SK-N-SH (cell line): ENCODE measurements at regions of chr20 and their contacts with region 1.

Region 1: DNA sequence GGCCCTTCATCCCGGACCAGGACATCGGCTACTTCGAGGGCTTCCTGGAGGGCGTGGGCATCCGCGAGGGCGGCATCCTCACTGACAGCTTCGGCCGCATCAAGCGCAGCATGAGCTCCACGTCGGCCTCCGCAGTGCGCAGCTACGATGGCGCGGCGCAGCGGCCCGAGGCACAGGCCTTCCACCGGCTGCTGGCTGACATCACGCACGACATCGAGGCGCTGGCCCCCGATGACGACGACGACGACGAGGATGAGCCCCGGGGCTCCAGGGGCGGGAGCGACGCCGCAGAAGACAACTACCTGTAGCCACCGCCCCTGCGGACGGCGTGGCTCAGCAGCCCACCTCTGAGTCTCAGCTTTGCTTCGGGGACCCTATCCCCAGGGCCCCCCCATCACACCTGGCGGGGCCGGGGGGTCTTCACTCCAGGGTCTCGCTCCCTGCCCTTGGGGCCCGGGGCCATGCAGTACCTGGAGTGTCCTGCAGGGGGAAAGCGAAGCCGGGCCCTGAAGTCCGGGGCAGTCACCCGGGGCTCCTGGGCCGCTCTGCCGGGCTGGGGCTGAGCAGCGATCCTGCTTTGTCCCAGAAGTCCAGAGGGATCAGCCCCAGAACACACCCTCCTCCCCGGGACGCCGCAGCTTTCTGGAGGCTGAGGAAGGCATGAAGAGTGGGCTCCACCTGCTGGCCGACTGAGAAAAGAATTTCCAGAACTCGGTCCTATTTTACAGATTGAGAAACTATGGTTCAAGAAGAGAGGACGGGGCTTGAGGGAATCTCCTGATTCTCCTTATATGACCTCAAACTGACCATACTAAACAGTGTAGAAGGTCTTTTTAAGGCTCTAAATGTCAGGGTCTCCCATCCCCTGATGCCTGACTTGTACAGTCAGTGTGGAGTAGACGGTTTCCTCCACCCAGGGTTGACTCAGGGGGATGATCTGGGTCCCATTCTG is 20.8 kb upstream of the HCK start:
- DNase-seq: peak; percentile 89
- H3K4me3 ChIP-seq: peak overlapping the region; percentile 34 to 87; a peak in 3 of 4 replicates
- H3K27ac ChIP-seq: no peak overlapping the region
- H3K4me1 ChIP-seq: peaks cover 0 to 7% of the 10 kb centered on the region in 2 experiments; a peak in 1 of 4 replicates
- H3K27me3 ChIP-seq: peaks cover 38% of the 10 kb centered on the region
- CTCF ChIP-seq: peak; percentile 98
- EP300 ChIP-seq: no peak
- RAD21 ChIP-seq: peak; percentile 82

Region 2: GRCh38 chr20:31822421-31823330 is 208.6 kb before region 1 on chr20:
- CTCF ChIA-PET with region 1: interaction called, 120 read pairs
- POLR2A ChIA-PET with region 1: interaction called, 3 read pairs
- DNase-seq: peak; percentile 94
- H3K4me3 ChIP-seq: peak overlapping the region; percentile 41 to 70
- H3K27ac ChIP-seq: peak overlapping the region in 1 of 2 experiments; percentile 66; a peak in 2 of 4 replicates
- H3K4me1 ChIP-seq: peaks cover 0 to 8% of the 10 kb centered on the region in 2 experiments; a peak in 1 of 4 replicates
- H3K27me3 ChIP-seq: no peaks in the 10 kb centered on the region
- CTCF ChIP-seq: peak; percentile 98
- EP300 ChIP-seq: no peak
- RAD21 ChIP-seq: peak; percentile 96

Region 3: DNA sequence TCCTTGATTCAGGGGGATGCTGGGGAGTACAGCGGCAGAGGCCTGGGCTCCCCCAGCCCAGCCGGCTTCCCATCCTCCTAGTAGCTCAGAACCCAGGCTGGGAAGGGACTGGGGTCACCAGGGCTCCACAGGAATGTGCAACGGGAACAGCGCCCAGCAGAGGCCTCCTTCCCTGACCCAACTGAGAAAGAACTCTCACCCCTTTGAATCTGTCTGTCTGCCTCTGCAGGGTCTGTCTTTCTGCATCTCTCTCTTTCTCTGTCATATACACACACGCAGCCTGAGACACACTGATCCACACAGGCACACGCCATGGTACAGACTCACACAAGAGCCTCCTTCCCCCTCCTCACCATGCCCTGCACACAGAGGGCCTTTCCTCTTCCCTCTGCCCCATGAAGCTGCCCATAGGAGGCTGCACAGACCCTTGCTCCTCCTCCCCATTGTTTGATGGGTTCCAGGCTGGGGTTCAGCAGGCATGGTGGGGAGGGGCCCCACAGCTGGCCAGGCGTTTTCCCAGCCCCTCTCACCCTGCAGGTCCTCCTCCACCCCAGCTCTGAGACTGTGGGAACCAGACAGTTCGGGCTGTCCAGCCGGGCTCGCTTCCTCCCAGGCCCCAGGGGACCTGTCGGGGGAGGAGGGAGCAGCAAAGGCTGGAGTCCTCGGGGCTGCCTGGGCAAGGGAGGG is 188.7 kb before region 1 on chr20:
- CTCF ChIA-PET with region 1: interaction called, 43 read pairs
- POLR2A ChIA-PET with region 1: no interaction called
- DNase-seq: peak; percentile 58
- H3K4me3 ChIP-seq: no peak overlapping the region; a peak in 1 of 4 replicates
- H3K27ac ChIP-seq: peak overlapping the region; percentile 71 to 76
- H3K4me1 ChIP-seq: peaks cover 37 to 42% of the 10 kb centered on the region in 2 experiments
- H3K27me3 ChIP-seq: no peaks in the 10 kb centered on the region
- CTCF ChIP-seq: no peak
- EP300 ChIP-seq: no peak
- RAD21 ChIP-seq: no peak

Region 4: DNA sequence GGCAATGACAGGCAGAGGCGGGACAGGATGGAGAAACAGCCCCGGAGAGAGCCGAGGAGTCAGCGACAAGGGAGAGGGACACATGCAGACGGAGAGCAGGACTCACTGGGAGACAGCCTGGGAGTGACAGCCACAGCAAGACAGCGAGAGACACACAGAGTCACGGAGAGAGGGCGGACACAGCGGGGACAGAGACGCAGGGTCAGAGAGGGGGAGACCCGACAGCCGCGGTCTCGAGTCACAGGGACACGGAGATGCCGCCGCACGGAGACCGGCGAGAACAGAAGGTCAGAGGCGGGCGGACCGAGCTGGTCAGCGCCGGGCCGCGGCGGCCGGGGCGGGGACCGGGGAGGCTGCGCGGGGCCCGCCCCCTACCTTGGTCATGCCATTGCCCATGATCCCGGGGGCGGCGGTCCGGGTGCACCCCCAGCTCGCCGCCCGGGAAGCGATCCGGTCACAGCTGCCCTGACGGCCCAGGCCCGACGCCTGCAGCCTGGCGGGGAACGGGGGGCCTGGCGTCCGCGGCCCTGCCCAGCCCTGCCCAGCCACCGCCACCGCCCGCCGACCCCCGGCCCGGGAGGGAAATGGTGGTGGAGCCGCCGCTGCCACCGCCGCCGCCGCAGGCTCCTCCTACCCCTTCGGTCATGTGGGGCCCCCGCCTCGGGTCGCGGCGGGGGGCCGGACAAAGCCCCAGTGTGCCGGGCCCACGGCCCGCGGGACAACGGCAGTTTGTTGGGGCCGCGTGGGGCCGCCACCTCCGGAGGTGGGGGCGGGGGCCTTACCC is 161.1 kb before region 1 on chr20 and contains the starts of genes DUSP15 and TTLL9:
- CTCF ChIA-PET with region 1: interaction called, 11 read pairs
- POLR2A ChIA-PET with region 1: no interaction called
- DNase-seq: peak; percentile 90
- H3K4me3 ChIP-seq: peak within 1 kb of the TSS; percentile 66 to 69
- H3K27ac ChIP-seq: peak within 1 kb of the TSS in 1 of 2 experiments; percentile 62; a peak in 1 of 4 replicates
- H3K4me1 ChIP-seq: peaks cover 0 to 23% of the 10 kb centered on the region in 2 experiments; a peak in 1 of 4 replicates
- H3K27me3 ChIP-seq: no peaks in the 10 kb centered on the region
- CTCF ChIP-seq: no peak
- EP300 ChIP-seq: no peak
- RAD21 ChIP-seq: no peak
- polyA plus RNA-seq, gene DUSP15: 4.3 and 5.4 TPM in 2 replicates
- polyA plus RNA-seq, gene TTLL9: 0.23 and 0.32 TPM in 2 replicates

Region 5: GRCh38 chr20:31968291-31969126 is 62.8 kb before region 1 on chr20:
- CTCF ChIA-PET with region 1: interaction called, 34 read pairs
- POLR2A ChIA-PET with region 1: no interaction called
- DNase-seq: peak; percentile 81
- H3K4me3 ChIP-seq: peak overlapping the region; percentile 55 to 56; a peak in 3 of 4 replicates
- H3K27ac ChIP-seq: peak overlapping the region in 1 of 2 experiments; percentile 75; a peak in 2 of 4 replicates
- H3K4me1 ChIP-seq: peaks cover 0 to 17% of the 10 kb centered on the region in 2 experiments; a peak in 2 of 4 replicates
- H3K27me3 ChIP-seq: peaks cover 30% of the 10 kb centered on the region
- CTCF ChIP-seq: no peak
- EP300 ChIP-seq: peak in 1 of 2 experiments; percentile 24; a peak in 1 of 4 replicates
- RAD21 ChIP-seq: no peak

Region 6: DNA sequence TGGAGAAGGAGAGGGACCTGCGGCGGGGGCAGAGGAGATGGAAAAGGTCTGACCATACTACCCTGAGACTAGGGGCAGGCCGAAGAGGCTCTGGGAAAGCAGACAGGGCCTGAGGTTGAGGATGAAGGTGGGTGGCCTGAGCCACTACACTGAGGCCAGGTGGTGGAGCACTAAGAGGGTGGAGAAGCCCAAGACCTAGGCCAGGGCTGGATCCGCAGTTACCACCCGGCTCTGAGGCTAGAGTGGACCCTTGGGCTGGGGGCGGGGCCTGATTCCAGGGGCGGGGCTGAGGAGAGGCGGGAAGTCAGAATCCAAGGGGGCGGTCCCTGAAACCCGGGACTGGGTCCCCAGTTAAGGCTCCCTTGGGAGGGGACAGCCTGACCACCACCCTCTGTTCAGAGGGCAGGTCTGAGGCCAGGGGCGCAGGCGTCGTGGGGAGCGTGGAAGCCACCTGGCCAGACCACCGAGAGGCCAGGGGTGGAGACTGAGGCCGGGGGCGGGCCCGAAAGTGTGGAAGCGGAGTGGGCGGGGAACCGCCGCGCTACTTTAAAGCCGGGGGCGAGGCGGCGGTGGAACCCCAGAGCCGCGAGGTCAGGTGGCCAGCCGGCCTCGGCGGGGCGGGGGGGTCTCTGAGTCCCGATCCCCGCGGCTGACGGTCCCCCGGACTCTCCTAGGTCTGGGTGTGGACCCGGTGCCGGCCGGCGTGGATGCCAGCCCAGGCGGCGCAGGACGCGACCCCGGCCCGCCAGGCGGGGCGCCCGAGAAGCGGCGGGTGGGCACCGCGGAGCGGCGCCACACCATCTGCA is 12.8 kb before region 1 on chr20:
- CTCF ChIA-PET with region 1: interaction called, 74 read pairs
- POLR2A ChIA-PET with region 1: interaction called, 5 read pairs
- DNase-seq: peak; percentile 96
- H3K4me3 ChIP-seq: peak overlapping the region; percentile 46 to 54
- H3K27ac ChIP-seq: no peak overlapping the region
- H3K4me1 ChIP-seq: peaks cover 0 to 13% of the 10 kb centered on the region in 2 experiments; a peak in 1 of 4 replicates
- H3K27me3 ChIP-seq: peaks cover 61% of the 10 kb centered on the region
- CTCF ChIP-seq: no peak
- EP300 ChIP-seq: no peak
- RAD21 ChIP-seq: no peak

Region 7: GRCh38 chr20:32077190-32077589 is 45.9 kb after region 1 on chr20:
- CTCF ChIA-PET with region 1: interaction called, 11 read pairs
- POLR2A ChIA-PET with region 1: no interaction called
- DNase-seq: no peak
- H3K4me3 ChIP-seq: no peak overlapping the region
- H3K27ac ChIP-seq: no peak overlapping the region
- H3K4me1 ChIP-seq: no peaks in the 10 kb centered on the region; a peak in 1 of 4 replicates
- H3K27me3 ChIP-seq: no peaks in the 10 kb centered on the region; the same call in none of the 2 replicates
- CTCF ChIP-seq: no peak
- EP300 ChIP-seq: no peak
- RAD21 ChIP-seq: no peak

Region 8: DNA sequence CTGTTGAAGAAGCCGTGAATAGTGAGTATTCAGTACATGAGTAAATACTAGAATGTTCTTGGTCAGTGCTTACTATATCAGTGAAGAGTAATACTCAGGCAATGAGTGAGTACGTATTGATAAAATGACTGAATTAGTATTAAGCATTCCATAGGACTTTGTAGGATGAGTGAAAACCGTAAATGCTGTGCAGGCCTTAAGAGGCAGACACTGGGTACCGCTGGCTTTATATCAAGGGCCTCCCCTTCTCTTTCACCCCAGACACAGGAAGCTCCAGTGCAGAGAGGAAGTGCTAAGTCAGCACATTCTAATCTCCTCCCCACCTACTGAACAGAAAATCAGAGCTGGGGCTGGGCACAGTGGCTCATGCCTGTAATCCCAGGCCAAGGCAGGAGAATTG is 200.6 kb after region 1 on chr20:
- CTCF ChIA-PET with region 1: no interaction called
- POLR2A ChIA-PET with region 1: no interaction called
- DNase-seq: no peak
- H3K4me3 ChIP-seq: no peak overlapping the region
- H3K27ac ChIP-seq: no peak overlapping the region
- H3K4me1 ChIP-seq: no peaks in the 10 kb centered on the region
- H3K27me3 ChIP-seq: no peaks in the 10 kb centered on the region
- CTCF ChIP-seq: no peak
- EP300 ChIP-seq: no peak
- RAD21 ChIP-seq: no peak